ENCODE measurements at regions of chr3 and their contacts with region 1.

Region 1: DNA sequence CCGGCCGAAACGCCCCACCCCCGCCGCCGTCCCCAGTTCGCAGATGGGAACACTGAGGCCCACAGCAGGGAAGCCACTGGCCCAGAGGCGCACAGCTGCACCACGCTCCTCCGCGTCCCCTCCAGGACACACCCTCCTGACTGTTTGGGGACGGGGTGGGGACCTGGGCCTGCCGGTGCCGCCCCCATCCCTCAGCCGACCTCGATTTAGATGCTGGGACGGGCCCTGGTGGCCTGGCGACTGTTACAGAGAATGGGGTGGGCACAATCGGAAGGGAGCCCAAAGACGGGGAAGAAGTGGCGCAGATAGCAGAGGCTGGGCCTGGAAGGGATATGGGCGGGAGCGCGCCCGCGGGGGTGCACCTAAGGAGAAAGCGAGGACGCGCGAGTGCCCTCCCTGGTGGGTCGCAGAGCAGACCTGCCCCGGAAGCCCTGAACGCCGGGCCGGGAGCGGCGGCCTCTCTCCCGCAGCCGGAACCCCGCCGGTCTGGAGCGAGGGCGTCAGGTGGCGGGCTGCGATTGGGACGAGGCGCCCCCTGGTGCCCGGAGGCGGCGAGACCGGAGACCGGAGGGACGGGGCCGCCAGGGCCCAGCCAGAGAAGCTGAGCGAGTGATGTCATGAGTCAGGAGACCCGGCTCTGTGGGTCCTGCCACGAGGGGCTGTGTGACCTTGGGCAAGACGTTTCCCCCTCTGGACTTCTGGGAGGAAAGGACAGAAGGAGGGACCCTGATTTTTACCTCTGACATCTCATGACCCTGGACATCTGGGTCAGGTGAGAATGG is 78.4 kb downstream of the IQSEC1 start:
- DNase-seq: peak; percentile 48
- ATAC-seq: peak; percentile 81
- H3K4me3 ChIP-seq: peak overlapping the region; percentile 83 to 94
- H3K27ac ChIP-seq: peak overlapping the region; percentile 73
- H3K4me1 ChIP-seq: peaks cover 19 to 44% of the 10 kb centered on the region in 2 experiments
- H3K27me3 ChIP-seq: no peaks in the 10 kb centered on the region
- CTCF ChIP-seq: peak in 2 of 3 experiments; percentile 79 to 87; a peak in 4 of 6 replicates
- POLR2A ChIP-seq: no peak
- RAD21 ChIP-seq: no peak

Region 2: GRCh38 chr3:12868039-12869034 is 126.5 kb before region 1 on chr3:
- CTCF ChIA-PET with region 1: interaction called, 3 read pairs
- POLR2A ChIA-PET with region 1: no interaction called
- RAD21 ChIA-PET with region 1: no interaction called
- intact Hi-C with region 1: loop called (anchors 2 kb)
- DNase-seq: peak; percentile 75
- ATAC-seq: peak; percentile 90
- H3K4me3 ChIP-seq: no peak overlapping the region
- H3K27ac ChIP-seq: no peak overlapping the region; the same call in 1 of the 2 replicates
- H3K4me1 ChIP-seq: peaks cover 10% of the 10 kb centered on the region in 2 experiments; a peak in 3 of 4 replicates
- H3K27me3 ChIP-seq: no peaks in the 10 kb centered on the region
- CTCF ChIP-seq: peak; percentile 83 to 90 (median 87)
- POLR2A ChIP-seq: no peak
- RAD21 ChIP-seq: peak; percentile 94